ENCODE measurements at regions of chr5 and their contacts with region 1.

Region 1: DNA sequence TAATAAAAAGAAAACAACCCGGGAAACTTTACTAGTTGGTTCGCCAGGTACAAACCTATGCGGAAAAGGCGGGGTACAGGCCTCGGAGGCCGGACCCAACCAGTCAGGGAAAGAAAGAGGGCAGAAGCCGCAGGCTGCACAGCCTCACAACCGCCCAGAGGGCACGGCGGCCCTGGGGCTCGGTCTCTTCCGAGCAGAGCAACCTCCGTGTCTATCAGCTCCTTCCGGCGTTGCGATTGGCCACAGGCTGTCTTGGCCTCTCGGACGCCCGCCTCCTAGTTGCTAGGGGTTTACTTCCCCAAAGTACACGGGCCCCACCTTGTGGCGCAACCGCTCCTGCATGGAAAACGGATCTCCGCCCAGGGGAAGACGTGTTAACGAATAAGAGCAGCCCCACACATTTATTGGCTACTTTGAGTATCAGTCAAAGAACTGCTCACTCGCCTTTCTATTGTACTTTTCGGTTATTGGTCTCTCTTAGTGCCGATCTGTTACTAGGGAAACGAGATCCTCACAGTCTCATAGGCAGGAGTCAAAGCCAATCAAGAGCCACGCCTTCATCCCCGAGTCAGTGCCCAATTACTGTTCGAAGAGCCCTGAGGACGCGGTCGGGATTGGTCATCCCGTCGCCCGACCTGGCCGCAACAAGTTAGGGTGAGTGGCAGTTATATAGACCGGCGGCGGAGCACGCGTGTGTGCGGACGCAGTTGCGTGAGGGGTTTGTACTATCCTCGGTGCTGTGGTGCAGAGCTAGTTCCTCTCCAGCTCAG is at the start of gene G3BP1:
- DNase-seq: peak; percentile 100
- H3K4me3 ChIP-seq: peak within 1 kb of the TSS; percentile 92
- H3K27ac ChIP-seq: peak within 1 kb of the TSS; percentile 97
- H3K4me1 ChIP-seq: peaks cover 34% of the 10 kb centered on the region
- H3K27me3 ChIP-seq: no peaks in the 10 kb centered on the region
- CTCF ChIP-seq: no peak; the same call in 1 of the 2 replicates
- total RNA-seq, gene G3BP1: 203 and 254 TPM in 2 replicates

Region 2: GRCh38 chr5:151239237-151239861 is 532.1 kb before region 1 on chr5:
- CTCF ChIA-PET with region 1: no interaction called
- POLR2A ChIA-PET with region 1: interaction called, 12 read pairs
- intact Hi-C with region 1: no loop called
- DNase-seq: peak in 1 of 2 experiments; percentile 63
- H3K4me3 ChIP-seq: no peak overlapping the region
- H3K27ac ChIP-seq: no peak overlapping the region
- H3K4me1 ChIP-seq: peaks cover 8% of the 10 kb centered on the region
- H3K27me3 ChIP-seq: 0 out of 2 replicates have a peak, but pooled peaks cover 4% of the 10 kb centered on the region
- CTCF ChIP-seq: peak; percentile 88

Region 3: GRCh38 chr5:151447174-151448037 is 324.0 kb before region 1 on chr5 and contains the start of gene SLC36A1:
- CTCF ChIA-PET with region 1: interaction called, 4 read pairs
- POLR2A ChIA-PET with region 1: no interaction called
- intact Hi-C with region 1: loop called (anchors 5 kb)
- DNase-seq: peak; percentile 71 to 89
- H3K4me3 ChIP-seq: peak within 1 kb of the TSS; percentile 70
- H3K27ac ChIP-seq: no peak within 1 kb of the TSS
- H3K4me1 ChIP-seq: peaks cover 7% of the 10 kb centered on the region
- H3K27me3 ChIP-seq: no peaks in the 10 kb centered on the region
- CTCF ChIP-seq: peak; percentile 93
- total RNA-seq, gene SLC36A1: 7.4 and 11.0 TPM in 2 replicates

Region 4: DNA sequence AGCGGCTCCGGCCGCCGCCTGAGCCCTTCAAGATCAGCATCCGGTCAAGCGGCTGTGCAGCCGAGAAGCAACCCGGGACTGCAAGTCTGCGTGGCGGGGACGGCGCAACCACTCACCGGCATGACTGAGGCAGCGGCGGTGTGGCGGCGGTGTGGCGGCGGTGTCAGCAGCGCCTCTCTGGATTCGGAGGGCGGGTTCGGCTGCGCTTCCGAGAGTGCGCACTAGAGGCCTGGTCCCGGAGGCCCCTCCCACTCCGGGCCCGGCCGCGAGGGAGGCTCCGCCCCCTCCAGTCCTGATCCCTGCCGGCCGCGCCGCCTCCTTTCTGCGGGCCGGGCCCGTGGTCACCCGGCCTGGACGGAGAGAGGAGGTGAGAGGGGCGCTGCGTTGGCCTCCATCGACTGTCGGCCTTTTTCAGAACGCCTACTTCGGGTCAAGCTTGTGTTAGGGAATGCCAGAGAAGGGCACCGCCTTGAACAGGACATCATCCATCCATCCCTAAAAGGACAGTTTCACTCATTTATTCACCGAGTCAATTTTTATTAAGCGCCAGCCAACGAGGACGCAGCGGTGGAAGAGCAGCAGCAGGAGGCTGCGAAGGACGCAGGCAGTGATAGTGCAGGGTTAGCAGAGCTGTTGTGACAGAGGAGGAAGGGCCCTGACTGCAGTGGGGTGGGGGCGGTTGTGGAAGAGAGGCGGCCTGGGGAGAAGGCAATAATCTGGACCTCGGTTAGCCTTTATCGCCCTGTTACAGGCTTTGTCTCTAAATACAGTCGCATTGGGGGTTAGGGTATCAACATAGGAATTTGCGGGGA is 12.8 kb before region 1 on chr5 and contains the start of gene ATOX1:
- CTCF ChIA-PET with region 1: interaction called, 3 read pairs
- POLR2A ChIA-PET with region 1: interaction called, 14 read pairs
- intact Hi-C with region 1: loop called (anchors 1 kb)
- DNase-seq: peak; percentile 65 to 95
- H3K4me3 ChIP-seq: peak within 1 kb of the TSS; percentile 97
- H3K27ac ChIP-seq: 0 out of 2 replicates have a peak within 1 kb of the TSS, but pooled peaks have one; percentile 24
- H3K4me1 ChIP-seq: peaks cover 16% of the 10 kb centered on the region
- H3K27me3 ChIP-seq: no peaks in the 10 kb centered on the region
- CTCF ChIP-seq: no peak
- total RNA-seq, gene ATOX1: 175 and 201 TPM in 2 replicates

Region 5: DNA sequence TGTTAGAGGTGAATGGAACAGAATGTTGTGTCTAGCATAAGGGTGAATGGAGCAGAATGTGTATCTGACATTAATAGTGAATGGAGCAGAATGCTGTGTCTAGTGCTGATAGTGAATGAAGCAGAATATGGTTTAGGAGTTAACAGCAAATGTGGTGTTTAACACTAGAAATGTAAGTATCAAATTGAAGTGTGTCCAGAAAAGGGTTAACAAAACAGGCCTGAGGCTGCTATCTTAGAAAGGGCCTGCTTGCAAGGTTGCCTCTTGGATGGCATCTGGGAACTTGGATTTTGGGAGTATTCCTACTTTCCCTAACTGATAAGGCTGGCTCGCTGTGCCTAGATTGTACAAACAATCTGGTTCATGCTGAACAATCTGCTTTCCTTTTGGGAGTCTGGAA is 76.4 kb after region 1 on chr5:
- CTCF ChIA-PET with region 1: no interaction called
- POLR2A ChIA-PET with region 1: no interaction called
- intact Hi-C with region 1: no loop called
- DNase-seq: no peak
- H3K4me3 ChIP-seq: no peak overlapping the region
- H3K27ac ChIP-seq: no peak overlapping the region
- H3K4me1 ChIP-seq: no peaks in the 10 kb centered on the region
- H3K27me3 ChIP-seq: peaks cover 10% of the 10 kb centered on the region; the same call in 1 of the 2 replicates
- CTCF ChIP-seq: no peak

Measured in PC-9 (cell line).